Activated CD8-positive, alpha-beta T cell treated with anti-CD3 and anti-CD28 coated beads, Interleukin-2, amount 10 ng/mL, durations not matched to agents 7 days and 5 days (primary cell): ENCODE measurements at regions of chr12 and their contacts with region 1.

Region 1: DNA sequence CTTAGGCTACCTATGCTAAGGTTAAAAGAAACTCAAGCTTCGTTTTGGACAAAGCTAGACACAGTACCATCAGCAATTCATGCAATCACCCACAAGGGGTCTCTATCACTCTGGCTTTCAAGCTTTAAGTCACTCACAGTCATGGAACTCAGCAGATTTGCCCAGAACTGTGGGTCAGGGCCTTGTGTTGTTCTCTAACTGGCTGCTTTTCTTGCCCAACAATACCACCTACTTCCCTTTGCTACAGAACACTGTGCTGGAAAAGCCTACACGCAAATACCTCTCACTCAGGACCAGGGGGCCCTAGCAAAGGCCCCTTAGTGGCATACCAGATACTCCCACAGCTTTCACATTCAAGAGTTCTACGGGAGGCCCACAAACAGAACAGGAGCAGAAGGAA is 9.1 kb downstream of the NEMP1 start:
- DNase-seq: peak; percentile 78
- ATAC-seq: peak; percentile 95
- H3K4me3 Mint-ChIP-seq: peak overlapping the region; percentile 5
- H3K27ac Mint-ChIP-seq: peak overlapping the region; percentile 76
- H3K4me1 Mint-ChIP-seq: peaks cover 44% of the 10 kb centered on the region
- H3K27me3 Mint-ChIP-seq: no peaks in the 10 kb centered on the region

Region 2: DNA sequence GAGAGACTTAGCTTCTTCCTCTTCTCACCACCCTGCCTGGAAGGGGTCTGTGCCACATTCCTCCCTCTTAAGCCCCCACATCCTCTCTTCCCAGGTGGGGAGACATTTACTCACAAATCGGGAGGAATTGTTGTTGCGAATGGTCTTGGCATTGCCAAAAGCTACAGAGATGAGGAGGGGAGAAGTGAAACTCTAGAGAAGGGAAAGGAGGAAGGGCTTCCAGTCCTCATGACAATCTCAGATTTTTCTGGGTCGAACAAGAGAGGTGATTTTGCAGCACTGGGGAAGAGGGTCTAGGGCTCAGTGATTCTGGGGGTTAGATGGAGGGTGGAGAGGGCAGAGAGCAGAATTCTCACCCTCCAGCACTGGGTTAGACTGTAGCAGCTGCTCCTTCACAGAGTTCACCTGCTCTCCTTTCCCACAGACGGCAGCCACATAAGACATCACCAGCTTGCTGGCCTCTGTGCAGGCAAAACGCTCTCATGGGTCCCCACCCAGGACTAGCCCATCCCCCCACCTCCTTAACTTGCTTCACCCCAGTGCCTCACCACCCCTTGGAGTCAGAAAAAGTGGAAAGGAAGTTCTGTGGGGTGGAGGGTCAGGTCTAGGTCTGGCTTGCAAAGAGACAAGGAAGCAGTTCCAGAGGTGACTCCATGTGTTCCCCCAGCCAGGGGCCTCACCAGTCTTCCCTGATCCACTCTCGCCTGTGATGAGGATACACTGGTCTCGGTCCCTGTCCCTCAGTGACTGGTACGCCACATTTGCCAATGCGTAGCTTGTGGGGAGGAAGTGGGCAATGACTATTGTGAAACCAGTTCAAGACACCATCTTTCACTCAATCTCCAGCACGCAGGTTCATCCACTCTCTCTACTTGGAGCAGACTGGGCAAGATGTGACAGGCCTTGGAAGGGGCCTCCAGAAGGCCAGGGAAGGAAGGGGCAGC is 22.3 kb before region 1 on chr12:
- CTCF ChIA-PET with region 1: interaction called, 25 read pairs
- POLR2A ChIA-PET with region 1: interaction called, 4 read pairs
- DNase-seq: peak; percentile 84
- ATAC-seq: peak; percentile 83
- H3K4me3 Mint-ChIP-seq: peak overlapping the region; percentile 49
- H3K27ac Mint-ChIP-seq: peak overlapping the region; percentile 86
- H3K4me1 Mint-ChIP-seq: peaks cover 46% of the 10 kb centered on the region
- H3K27me3 Mint-ChIP-seq: no peaks in the 10 kb centered on the region

Region 3: DNA sequence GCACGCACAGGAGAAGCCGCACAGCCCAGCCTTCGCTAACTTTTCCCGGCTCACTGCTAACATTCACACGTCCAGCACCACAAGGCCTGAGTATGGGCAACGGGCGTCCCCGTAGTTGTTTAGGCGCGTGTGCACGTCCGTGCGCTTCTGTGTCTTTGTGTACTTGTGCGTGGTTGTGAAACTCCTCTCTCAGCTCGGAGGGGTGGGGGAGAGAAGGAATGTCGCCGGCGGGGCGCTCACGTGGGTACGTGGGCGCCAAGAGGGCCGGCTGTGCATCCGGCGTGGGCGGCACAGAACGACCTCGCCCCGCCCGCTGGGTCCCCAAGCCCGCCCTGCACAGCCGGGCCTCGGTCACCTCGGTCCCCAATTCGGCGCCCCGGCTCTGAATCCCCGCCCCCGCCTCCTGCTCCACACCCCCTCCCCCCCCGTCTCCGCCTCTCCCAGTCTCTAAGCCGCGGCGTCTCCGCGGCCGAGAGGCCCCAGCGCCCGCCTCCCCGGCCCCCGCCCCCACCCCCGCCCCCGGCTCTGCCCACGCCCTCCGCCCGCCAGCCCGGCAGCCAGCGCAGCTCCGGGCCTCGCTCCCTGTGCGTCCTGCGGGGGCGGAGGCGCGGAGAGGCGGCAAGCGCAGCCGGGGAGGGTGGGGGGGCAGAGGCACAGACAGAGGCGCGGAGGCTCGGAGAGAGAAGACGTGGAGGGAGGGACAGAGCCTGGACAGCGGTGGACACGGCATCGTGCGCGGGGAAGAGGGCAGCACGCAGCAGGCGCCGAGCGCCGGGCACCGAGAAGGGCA is 19.1 kb after region 1 on chr12 and contains the start of gene NAB2:
- CTCF ChIA-PET with region 1: interaction called, 190 read pairs
- POLR2A ChIA-PET with region 1: interaction called, 6 read pairs
- DNase-seq: peak; percentile 98
- ATAC-seq: peak; percentile 78
- H3K4me3 Mint-ChIP-seq: peak within 1 kb of the TSS; percentile 93
- H3K27ac Mint-ChIP-seq: peak within 1 kb of the TSS; percentile 97
- H3K4me1 Mint-ChIP-seq: peaks cover 69% of the 10 kb centered on the region
- H3K27me3 Mint-ChIP-seq: no peaks in the 10 kb centered on the region
- total RNA-seq, gene NAB2: 12.9 to 13.7 TPM

Region 4: DNA sequence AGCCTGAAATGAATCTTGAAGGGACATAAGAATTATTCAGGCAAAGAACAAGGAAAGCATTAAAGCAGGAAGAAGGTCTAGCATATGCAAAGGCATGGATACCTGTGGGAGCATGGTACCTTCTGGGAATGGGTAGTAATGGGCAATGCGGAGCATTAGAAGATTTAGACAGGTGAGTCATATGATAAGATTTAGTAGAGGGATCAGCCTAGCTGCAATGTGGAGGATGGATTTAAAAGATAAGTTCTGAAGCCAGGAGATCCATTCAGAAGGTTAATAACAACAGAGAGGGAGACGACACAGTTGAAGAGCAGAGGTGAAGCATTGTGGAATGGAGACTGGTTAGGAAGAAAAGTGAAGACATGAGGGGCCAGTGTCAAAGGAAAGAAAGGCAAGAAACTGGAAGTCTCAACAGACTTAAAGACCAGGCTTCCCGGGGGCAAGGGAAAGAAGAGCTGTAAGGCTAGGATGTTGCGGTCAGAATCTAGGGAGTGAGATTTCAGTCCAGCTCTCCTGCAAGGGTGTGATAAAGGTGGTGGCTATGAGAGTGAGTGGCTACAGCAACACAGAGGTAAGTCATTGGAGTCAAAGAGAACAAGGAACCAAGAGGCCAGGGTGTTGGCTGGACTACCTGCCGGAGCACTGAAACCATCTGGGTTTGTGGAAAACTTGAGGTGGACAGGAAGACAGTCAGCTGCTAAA is 47.2 kb after region 1 on chr12:
- CTCF ChIA-PET with region 1: interaction called, 233 read pairs
- POLR2A ChIA-PET with region 1: interaction called, 84 read pairs
- DNase-seq: no peak
- ATAC-seq: no peak
- H3K4me3 Mint-ChIP-seq: no peak overlapping the region
- H3K27ac Mint-ChIP-seq: no peak overlapping the region
- H3K4me1 Mint-ChIP-seq: peaks cover 22% of the 10 kb centered on the region
- H3K27me3 Mint-ChIP-seq: peaks cover 5% of the 10 kb centered on the region

Region 5: DNA sequence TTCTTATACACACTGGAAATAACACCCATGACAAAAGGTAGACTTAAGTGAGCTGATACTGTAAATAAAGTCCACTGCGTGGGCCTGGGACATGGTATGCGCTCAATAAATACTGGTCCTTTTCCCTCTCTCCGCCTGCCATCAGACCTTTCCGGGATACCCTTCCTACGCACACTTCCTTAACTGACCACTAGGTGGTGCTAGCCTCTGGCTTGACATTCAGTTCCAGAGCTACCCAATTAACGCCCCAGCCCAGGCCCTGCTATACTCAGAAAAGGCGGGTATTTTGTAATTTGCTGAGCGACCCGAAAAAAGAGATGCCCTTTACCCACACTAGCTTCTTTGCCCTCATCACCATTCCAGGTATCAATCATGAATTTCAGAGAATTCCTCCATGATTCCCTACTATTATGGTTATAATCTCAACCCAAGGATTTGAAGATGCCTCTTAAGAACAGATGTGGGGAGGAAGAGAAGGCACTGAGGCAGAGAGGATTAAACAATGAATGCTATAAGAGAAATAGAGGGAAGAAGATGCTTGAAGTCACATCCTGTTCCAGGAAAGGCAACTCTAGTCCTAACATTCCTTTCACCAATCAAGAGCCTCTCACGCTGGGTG is 54.8 kb after region 1 on chr12:
- CTCF ChIA-PET with region 1: interaction called, 15 read pairs
- POLR2A ChIA-PET with region 1: interaction called, 3 read pairs
- DNase-seq: peak; percentile 85
- ATAC-seq: peak; percentile 65
- H3K4me3 Mint-ChIP-seq: no peak overlapping the region
- H3K27ac Mint-ChIP-seq: no peak overlapping the region
- H3K4me1 Mint-ChIP-seq: peaks cover 5% of the 10 kb centered on the region
- H3K27me3 Mint-ChIP-seq: peaks cover 29% of the 10 kb centered on the region

Region 6: DNA sequence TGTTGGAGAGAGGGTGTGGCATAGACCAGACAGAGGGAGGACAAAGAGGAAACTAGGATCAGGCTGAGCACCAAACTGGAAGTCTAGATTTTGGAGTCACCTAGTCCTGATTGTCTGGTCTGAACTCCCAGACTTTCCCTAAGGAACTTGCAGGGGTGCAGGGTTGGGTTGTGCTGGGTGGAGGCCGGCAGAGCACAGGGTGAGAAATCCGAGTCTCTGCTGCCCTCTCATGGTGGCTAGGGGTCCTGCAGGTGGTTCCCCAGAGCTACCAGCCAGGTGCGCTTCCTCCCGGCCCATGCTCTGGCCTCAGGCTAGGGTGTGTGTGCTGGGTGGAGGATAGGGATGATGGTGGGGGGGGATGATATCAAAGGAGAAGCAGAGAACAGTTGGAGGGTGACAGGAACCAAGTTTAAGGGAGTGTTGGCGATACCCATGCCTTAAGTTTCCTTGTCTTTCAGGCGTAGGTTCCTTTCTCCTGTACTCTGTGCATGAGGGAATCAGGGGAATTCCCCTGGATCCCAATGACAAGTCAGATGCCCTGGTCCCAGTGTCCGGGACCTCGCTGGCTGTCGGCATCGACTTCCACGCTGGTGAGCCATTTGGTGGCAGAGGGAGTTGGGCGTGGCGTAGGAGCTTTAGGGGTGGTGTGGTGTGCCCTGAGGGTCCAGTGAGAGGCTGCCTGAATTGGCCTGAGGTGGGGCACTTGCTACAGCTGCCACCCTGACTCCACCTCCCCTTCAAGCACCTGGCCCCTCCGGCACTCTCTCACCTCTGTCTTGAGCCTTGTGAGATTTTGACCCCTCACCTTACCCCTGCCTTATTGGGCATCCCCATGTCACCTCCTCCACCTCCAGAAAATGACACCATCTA is 113.6 kb after region 1 on chr12:
- CTCF ChIA-PET with region 1: interaction called, 18 read pairs
- POLR2A ChIA-PET with region 1: no interaction called
- DNase-seq: peak; percentile 87
- ATAC-seq: peak; percentile 96
- H3K4me3 Mint-ChIP-seq: no peak overlapping the region
- H3K27ac Mint-ChIP-seq: no peak overlapping the region
- H3K4me1 Mint-ChIP-seq: peaks cover 5% of the 10 kb centered on the region
- H3K27me3 Mint-ChIP-seq: no peaks in the 10 kb centered on the region

Region 7: DNA sequence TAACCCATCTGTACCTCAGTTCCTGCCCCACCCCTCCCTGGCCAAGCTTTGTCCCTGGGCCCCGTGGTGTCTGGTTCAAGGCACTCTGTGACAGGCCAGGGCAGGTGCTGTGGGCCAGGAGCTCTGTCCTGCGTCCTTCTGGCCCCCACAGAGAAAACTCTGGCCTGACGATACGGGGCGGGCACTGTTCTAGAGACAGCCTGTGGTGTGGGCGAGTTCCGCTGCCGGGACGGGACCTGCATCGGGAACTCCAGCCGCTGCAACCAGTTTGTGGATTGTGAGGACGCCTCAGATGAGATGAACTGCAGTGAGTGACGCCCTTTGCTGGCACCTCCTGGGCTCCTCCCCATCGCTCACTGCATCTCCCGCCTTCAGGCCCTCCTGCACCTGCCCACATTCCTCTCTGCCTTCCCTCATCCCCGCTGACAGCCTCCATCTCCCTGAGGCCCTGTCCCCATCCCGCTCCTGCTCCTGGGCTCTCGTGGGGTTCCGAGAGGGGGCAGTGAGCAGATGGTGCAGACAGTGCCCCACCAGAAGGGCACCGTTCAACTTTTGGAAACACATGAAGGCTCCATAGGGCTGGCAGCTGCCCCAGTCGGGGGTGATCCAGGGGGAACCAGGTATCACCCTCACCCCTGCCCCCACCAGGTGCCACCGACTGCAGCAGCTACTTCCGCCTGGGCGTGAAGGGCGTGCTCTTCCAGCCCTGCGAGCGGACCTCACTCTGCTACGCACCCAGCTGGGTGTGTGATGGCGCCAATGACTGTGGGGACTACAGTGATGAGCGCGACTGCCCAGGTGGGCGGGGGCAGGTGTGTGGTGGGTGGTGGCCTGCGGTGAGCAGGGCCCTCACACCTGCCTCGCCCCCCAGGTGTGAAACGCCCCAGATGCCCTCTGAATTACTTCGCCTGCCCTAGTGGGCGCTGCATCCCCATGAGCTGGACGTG is 124.5 kb after region 1 on chr12:
- CTCF ChIA-PET with region 1: no interaction called
- POLR2A ChIA-PET with region 1: no interaction called
- DNase-seq: no peak
- ATAC-seq: no peak
- H3K4me3 Mint-ChIP-seq: no peak overlapping the region
- H3K27ac Mint-ChIP-seq: no peak overlapping the region
- H3K4me1 Mint-ChIP-seq: no peaks in the 10 kb centered on the region
- H3K27me3 Mint-ChIP-seq: no peaks in the 10 kb centered on the region